ENCODE measurements at regions of chr22 and their contacts with region 1.

Region 1: GRCh38 chr22:42169055-42169469 is 38.5 kb upstream of the CYP2D6 start:
- DNase-seq: peak; percentile 80 to 82 (median 80)
- ATAC-seq: peak; percentile 97
- H3K4me3 ChIP-seq: no peak overlapping the region
- H3K27ac ChIP-seq: no peak overlapping the region
- H3K4me1 ChIP-seq: peaks cover 0 to 4% of the 10 kb centered on the region in 2 experiments; a peak in 3 of 5 replicates
- H3K27me3 ChIP-seq: no peaks in the 10 kb centered on the region
- CTCF ChIP-seq: peak; percentile 96 to 100 (median 100)
- EP300 ChIP-seq: no peak
- POLR2A ChIP-seq: no peak
- RAD21 ChIP-seq: peak; percentile 96 to 98

Region 2: DNA sequence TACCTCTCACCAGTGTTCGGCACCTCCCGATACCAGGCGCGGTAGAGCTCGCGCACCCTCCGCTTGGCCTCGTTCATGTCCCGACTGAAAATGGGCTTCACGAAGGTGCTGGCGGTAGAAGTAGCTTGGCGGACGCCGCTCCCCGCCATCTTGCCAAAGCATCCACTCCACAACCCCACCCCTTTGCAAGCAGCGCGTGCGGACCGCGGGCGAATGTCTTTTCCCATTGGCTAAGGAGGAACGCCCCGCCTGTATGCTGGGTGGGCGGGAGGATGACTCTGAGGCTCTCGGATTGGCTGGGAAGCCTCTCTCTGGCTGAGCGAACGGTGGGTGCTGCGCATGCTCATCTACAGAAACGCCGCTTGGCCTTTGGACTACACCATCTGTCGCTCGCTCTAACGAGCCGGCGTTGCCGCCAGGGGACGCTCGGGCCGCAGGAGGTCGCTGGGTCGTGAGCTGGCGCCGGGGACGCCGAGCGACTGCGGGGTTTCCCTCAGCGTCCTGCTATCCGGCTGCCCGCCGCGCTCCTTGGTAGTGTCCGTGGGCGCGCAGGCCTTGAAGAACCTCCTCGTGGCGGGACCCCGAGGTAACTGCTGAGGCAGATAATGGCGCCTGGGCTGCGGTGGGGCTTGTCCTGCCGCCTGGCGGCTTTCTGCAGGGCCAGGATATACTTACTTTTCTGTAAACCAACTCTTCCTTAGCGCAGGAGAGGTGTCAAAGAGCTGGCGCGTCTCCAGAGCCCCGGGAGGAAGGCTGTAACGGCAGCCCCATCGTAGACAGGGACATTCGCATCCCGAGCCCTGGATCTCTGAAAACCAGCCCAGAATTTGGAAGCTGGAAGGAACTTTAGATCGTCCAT is 78.2 kb before region 1 on chr22 and contains the start of gene NDUFA6:
- CTCF ChIA-PET with region 1: no interaction called
- POLR2A ChIA-PET with region 1: no interaction called
- in situ Hi-C with region 1: no loop called
- intact Hi-C with region 1: loop called (anchors 2 kb)
- DNase-seq: peak; percentile 93 to 97 (median 95)
- ATAC-seq: peak; percentile 97
- H3K4me3 ChIP-seq: peak within 1 kb of the TSS; percentile 96
- H3K27ac ChIP-seq: peak within 1 kb of the TSS; percentile 100
- H3K4me1 ChIP-seq: peaks cover 4 to 8% of the 10 kb centered on the region in 2 experiments; a peak in 3 of 5 replicates
- H3K27me3 ChIP-seq: no peaks in the 10 kb centered on the region
- CTCF ChIP-seq: peak; percentile 89 to 92 (median 90)
- EP300 ChIP-seq: no peak
- POLR2A ChIP-seq: peak; percentile 95
- RAD21 ChIP-seq: peak; percentile 77 to 89
- polyA plus RNA-seq, gene NDUFA6: 465 to 474 TPM

Region 3: DNA sequence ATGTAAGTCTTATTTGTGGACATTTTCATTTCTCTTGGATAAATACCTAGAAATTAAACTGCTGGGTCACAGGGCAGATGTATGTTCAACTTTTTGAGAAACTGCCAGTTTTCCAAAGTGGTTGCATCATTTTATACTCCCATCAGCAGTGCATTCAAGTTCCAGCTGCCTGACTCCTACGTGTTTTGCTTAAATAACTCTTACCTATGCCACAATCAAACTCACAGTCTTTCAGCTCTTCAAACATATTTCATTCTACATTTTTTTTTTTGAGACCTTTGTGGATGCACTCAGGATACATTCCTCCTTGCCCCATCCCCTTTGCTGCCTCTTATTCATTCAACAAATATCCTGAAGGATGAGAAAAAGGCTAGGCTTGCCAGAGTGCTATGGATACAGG is 92.2 kb after region 1 on chr22:
- CTCF ChIA-PET with region 1: no interaction called
- POLR2A ChIA-PET with region 1: no interaction called
- in situ Hi-C with region 1: no loop called
- intact Hi-C with region 1: no loop called
- DNase-seq: no peak
- ATAC-seq: no peak
- H3K4me3 ChIP-seq: no peak overlapping the region
- H3K27ac ChIP-seq: no peak overlapping the region
- H3K4me1 ChIP-seq: peaks cover 0 to 16% of the 10 kb centered on the region in 2 experiments; a peak in 3 of 5 replicates
- H3K27me3 ChIP-seq: no peaks in the 10 kb centered on the region
- CTCF ChIP-seq: no peak
- EP300 ChIP-seq: no peak
- POLR2A ChIP-seq: no peak
- RAD21 ChIP-seq: no peak

Region 4: DNA sequence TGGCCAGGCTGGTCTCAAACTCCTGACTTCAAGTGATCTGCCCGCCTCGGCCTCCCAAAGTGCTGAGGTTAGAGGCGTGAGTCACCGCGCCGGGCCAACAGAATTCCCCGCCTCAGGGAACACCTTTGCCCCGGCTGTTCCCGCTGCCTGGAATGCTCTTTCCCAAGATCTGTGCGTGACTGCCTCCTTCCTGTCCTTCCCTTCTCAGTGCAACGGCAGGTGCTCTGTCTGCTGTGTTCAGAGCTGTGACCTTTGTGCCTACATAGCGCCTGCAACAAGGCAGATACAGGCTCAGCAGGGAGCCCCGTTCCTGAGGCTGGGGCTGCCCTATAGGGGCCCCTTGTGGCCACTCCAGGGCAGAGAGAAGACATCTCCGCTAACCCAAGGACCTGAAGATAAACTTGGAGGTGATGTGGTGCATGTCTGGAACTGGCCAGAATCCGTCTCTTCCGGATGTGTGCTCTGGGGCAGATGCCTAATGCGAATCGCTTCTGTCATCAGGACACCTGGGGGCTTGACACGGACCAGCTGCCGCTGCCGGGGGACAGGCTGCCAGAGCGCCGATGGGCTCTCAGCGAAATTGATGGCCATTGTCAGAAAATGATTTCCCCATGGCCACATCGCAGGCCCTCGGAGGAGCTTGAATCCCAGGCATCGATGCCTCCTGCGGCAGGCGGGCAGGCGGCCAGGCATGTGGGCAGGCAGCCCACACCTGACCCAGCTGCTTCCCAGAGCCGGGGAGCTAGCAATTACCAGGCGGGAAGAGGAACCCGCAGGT is 144.9 kb after region 1 on chr22:
- CTCF ChIA-PET with region 1: interaction called, 25 read pairs
- POLR2A ChIA-PET with region 1: no interaction called
- in situ Hi-C with region 1: loop called (anchors 5 kb)
- intact Hi-C with region 1: loop called (anchors 1 kb)
- DNase-seq: peak; percentile 45 to 67 (median 54)
- ATAC-seq: peak; percentile 94
- H3K4me3 ChIP-seq: no peak overlapping the region
- H3K27ac ChIP-seq: no peak overlapping the region
- H3K4me1 ChIP-seq: peaks cover 6 to 23% of the 10 kb centered on the region in 2 experiments; a peak in 4 of 5 replicates
- H3K27me3 ChIP-seq: no peaks in the 10 kb centered on the region
- CTCF ChIP-seq: peak; percentile 76 to 89 (median 80)
- EP300 ChIP-seq: no peak
- POLR2A ChIP-seq: no peak
- RAD21 ChIP-seq: peak; percentile 67 to 86

Region 5: DNA sequence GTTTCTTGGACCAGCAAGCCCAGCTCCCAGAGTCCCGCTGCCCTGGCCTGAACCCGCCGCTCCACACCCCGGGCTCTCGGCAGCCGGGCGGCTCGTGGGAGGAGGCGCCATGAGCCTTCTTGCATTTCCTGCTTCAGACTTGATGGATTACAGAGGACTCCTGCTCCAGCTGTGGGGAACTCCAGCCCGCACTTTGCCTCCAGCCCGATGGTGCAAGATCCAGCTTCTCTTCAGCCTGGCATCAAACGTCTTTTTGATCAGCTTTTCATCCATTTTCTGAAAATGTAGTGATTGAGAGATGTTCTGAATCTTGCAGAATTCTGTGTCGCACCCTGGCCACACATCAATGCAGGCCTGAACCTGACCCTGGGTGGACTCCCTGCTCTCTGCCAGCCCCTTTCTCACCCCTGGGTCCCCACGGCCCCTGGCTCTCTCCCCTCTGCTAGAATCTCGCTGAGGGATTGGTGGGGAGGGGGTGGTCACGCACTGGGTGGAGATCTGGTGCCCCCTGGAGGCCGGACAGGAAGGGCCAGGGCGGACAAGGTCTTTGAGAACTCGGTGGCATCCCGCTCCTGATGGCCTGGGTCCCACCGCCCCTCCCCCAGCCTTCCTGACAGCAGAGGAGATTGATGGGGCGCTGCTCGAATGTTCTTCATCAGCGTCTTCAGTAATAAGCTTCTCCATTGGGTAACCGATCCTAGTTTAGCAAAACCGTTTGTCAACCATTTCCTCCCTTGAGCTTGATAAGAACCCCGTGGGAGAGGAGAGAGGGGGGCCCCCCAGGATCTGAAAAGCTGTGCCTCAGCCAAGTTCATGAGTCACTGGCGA is 275.2 kb after region 1 on chr22:
- CTCF ChIA-PET with region 1: interaction called, 12 read pairs
- POLR2A ChIA-PET with region 1: no interaction called
- in situ Hi-C with region 1: loop called (anchors 5 kb)
- intact Hi-C with region 1: no loop called
- DNase-seq: peak; percentile 87 to 88 (median 88)
- ATAC-seq: peak; percentile 90
- H3K4me3 ChIP-seq: peak overlapping the region; percentile 30
- H3K27ac ChIP-seq: peak overlapping the region; percentile 75
- H3K4me1 ChIP-seq: peaks cover 14 to 35% of the 10 kb centered on the region in 2 experiments
- H3K27me3 ChIP-seq: no peaks in the 10 kb centered on the region
- CTCF ChIP-seq: peak; percentile 72 to 82 (median 78)
- EP300 ChIP-seq: peak; percentile 86; the same call in 1 of the 2 replicates
- POLR2A ChIP-seq: peak; percentile 55
- RAD21 ChIP-seq: peak; percentile 78 to 79